ENCODE measurements at regions of chr12 and their contacts with region 1.

Region 1: GRCh38 chr12:51083126-51083833 is at the start of gene CSRNP2:
- DNase-seq: peak; percentile 97
- H3K4me3 ChIP-seq: peak within 1 kb of the TSS; percentile 73 to 95 (median 88)
- H3K27ac ChIP-seq: peak within 1 kb of the TSS; percentile 88 to 93 (median 92)
- H3K4me1 ChIP-seq: peaks cover 9 to 11% of the 10 kb centered on the region in 2 donors
- H3K27me3 ChIP-seq: no peaks in the 10 kb centered on the region
- CTCF ChIP-seq: peak in 1 of 6 experiments; percentile 22
- POLR2A ChIP-seq: peak; percentile 98 to 100
- total RNA-seq, gene CSRNP2: 21.3 to 35.8 (median 28.9) TPM

Region 2: GRCh38 chr12:50934981-50935807 is 148.1 kb before region 1 on chr12:
- intact Hi-C with region 1: no loop called
- DNase-seq: no peak
- H3K4me3 ChIP-seq: no peak overlapping the region
- H3K27ac ChIP-seq: peak overlapping the region; percentile 95 to 98 (median 96)
- H3K4me1 ChIP-seq: peaks cover 77 to 84% of the 10 kb centered on the region in 2 donors
- H3K27me3 ChIP-seq: no peaks in the 10 kb centered on the region
- CTCF ChIP-seq: no peak
- POLR2A ChIP-seq: peak in 1 of 2 donors; percentile 31

Region 3: GRCh38 chr12:51000245-51000644 is 83.0 kb before region 1 on chr12:
- intact Hi-C with region 1: no loop called
- DNase-seq: no peak
- H3K4me3 ChIP-seq: no peak overlapping the region
- H3K27ac ChIP-seq: no peak overlapping the region
- H3K4me1 ChIP-seq: peaks cover 10 to 23% of the 10 kb centered on the region in 2 donors
- H3K27me3 ChIP-seq: no peaks in the 10 kb centered on the region
- CTCF ChIP-seq: no peak
- POLR2A ChIP-seq: no peak

Region 4: GRCh38 chr12:51127050-51127729 is 43.9 kb after region 1 on chr12:
- intact Hi-C with region 1: no loop called
- DNase-seq: no peak
- H3K4me3 ChIP-seq: no peak overlapping the region
- H3K27ac ChIP-seq: no peak overlapping the region
- H3K4me1 ChIP-seq: no peaks in the 10 kb centered on the region
- H3K27me3 ChIP-seq: no peaks in the 10 kb centered on the region
- CTCF ChIP-seq: no peak
- POLR2A ChIP-seq: no peak

Region 5: GRCh38 chr12:51172515-51173431 is 89.5 kb after region 1 on chr12 and contains the start of gene TFCP2:
- intact Hi-C with region 1: loop called (anchors 10 kb)
- DNase-seq: peak; percentile 98
- H3K4me3 ChIP-seq: peak within 1 kb of the TSS; percentile 39 to 54 (median 47)
- H3K27ac ChIP-seq: peak within 1 kb of the TSS; percentile 96 to 99 (median 97)
- H3K4me1 ChIP-seq: peaks cover 13 to 23% of the 10 kb centered on the region in 2 donors
- H3K27me3 ChIP-seq: no peaks in the 10 kb centered on the region
- CTCF ChIP-seq: peak in 1 of 6 experiments; percentile 8
- POLR2A ChIP-seq: peak in 1 of 2 donors; percentile 80
- total RNA-seq, gene TFCP2: 14.9 to 22.6 (median 21.3) TPM

Region 6: GRCh38 chr12:51238510-51239334 is 155.4 kb after region 1 on chr12 and contains the start of gene DAZAP2:
- intact Hi-C with region 1: loop called (anchors 10 kb)
- DNase-seq: peak; percentile 98
- H3K4me3 ChIP-seq: peak within 1 kb of the TSS; percentile 94 to 99 (median 98)
- H3K27ac ChIP-seq: peak within 1 kb of the TSS; percentile 100
- H3K4me1 ChIP-seq: peaks cover 13 to 21% of the 10 kb centered on the region in 2 donors
- H3K27me3 ChIP-seq: no peaks in the 10 kb centered on the region
- CTCF ChIP-seq: peak in 3 of 6 experiments; percentile 11 to 33 (median 23)
- POLR2A ChIP-seq: peak; percentile 77 to 90
- total RNA-seq, gene DAZAP2: 238 to 452 (median 323) TPM

Measured in thyroid gland (tissue), 4 donors.